ENCODE measurements at regions of chr5 and their contacts with region 1.

Region 1: DNA sequence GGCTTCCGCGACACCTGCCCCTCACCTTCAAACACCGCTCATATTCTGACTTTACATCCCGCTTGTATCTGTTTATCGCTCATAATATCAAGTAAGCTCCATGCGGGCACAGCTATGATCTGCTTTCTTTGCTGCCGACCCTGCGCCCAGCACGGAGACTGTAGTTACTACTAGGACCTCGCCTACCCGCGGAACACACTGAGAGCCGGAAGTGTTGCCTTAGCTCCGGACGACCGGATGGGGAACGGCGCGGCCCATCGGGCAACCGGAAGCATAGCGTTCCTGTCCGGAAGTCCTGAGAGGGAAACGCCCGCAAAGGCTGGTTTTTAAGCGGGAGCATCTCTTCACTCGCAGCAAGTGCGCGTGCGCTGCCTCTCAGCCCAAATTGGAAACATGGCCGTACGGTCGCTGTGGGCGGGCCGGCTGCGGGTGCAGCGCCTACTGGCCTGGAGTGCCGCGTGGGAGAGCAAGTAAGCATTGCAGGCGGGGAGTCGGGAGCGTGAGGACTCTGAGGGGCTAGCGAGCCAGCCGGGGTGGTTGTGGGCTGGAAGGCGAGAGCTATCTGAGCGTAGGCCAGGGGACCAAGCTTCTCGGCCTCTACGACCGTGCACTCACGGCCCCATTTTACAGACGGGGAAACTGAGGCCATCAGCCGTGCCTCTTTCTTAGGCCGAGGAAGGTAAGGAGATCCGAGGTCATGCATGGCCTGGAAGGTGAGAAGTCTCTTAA is at the start of gene GRPEL2:
- DNase-seq: peak; percentile 85
- H3K4me3 ChIP-seq: peak within 1 kb of the TSS; percentile 59 to 90 (median 63)
- H3K27ac ChIP-seq: peak within 1 kb of the TSS; percentile 71
- H3K4me1 ChIP-seq: peaks cover 42% of the 10 kb centered on the region
- H3K27me3 ChIP-seq: no peaks in the 10 kb centered on the region
- CTCF ChIP-seq: no peak
- POLR2A ChIP-seq: peak; percentile 83
- total RNA-seq, gene GRPEL2: 32.5 and 41.0 TPM in 2 replicates

Region 2: DNA sequence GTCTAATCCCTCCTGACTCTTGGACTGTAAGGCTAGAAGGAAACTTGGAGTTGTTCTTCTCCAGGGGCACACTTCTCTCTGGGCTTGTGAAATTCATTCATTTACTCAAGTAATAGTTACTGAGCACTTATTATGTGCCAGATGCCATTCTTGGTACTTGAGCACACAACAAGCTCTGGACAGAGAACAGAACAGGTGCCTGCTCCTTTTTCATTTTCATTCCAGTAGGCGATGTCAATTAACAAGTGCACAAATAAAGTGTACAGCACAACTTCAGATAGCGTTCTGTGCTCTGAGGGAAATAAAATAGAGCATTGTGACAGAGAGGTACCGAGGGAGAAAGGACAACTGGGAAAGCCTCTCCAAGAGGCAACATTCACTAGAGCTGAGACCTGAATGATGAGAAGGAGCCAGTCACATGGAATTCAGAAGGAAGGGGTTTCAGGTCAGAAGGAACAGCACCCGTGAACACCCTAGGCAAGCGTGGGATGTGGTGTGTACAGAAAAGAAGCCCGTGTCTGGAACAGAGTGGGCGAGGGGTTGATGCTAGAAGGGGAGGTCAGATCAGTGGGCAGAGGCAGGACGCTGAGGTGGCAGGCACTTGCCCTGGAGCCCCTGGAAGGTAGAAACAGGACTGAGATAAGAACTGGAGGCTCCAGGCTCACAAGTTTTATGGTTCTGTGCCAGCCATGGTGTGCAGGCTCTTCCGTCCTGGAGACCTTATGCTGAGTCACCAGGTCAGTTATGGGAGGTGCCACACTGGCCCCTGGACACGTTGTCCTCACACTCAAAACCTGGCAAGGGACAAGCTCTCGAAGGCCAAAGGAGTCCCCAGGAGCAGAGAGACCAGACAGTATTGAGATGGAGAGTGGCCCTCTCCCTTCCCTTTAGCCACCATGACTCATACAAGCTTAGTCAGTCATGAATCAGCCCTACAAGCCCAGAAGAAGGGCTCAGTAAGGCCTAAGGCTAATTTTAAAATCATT is 211.2 kb before region 1 on chr5:
- CTCF ChIA-PET with region 1: no interaction called
- POLR2A ChIA-PET with region 1: no interaction called
- dilution Hi-C with region 1: no loop called
- intact Hi-C with region 1: loop called (anchors 10 kb)
- DNase-seq: peak; percentile 79
- H3K4me3 ChIP-seq: no peak overlapping the region
- H3K27ac ChIP-seq: peak overlapping the region; percentile 96
- H3K4me1 ChIP-seq: peaks cover 36% of the 10 kb centered on the region
- H3K27me3 ChIP-seq: no peaks in the 10 kb centered on the region
- CTCF ChIP-seq: no peak
- POLR2A ChIP-seq: no peak

Region 3: GRCh38 chr5:149298842-149299404 is 46.4 kb before region 1 on chr5:
- CTCF ChIA-PET with region 1: no interaction called
- POLR2A ChIA-PET with region 1: no interaction called
- dilution Hi-C with region 1: no loop called
- intact Hi-C with region 1: loop called (anchors 2 kb)
- DNase-seq: peak; percentile 97
- H3K4me3 ChIP-seq: no peak overlapping the region
- H3K27ac ChIP-seq: peak overlapping the region; percentile 80
- H3K4me1 ChIP-seq: peaks cover 28% of the 10 kb centered on the region
- H3K27me3 ChIP-seq: no peaks in the 10 kb centered on the region
- CTCF ChIP-seq: no peak
- POLR2A ChIP-seq: peak; percentile 75

Region 4: GRCh38 chr5:149317281-149318048 is 27.8 kb before region 1 on chr5:
- CTCF ChIA-PET with region 1: interaction called, 14 read pairs
- POLR2A ChIA-PET with region 1: interaction called, 3 read pairs
- dilution Hi-C with region 1: no loop called
- intact Hi-C with region 1: loop called (anchors 1 kb)
- DNase-seq: peak; percentile 62
- H3K4me3 ChIP-seq: no peak overlapping the region
- H3K27ac ChIP-seq: no peak overlapping the region
- H3K4me1 ChIP-seq: peaks cover 22% of the 10 kb centered on the region
- H3K27me3 ChIP-seq: no peaks in the 10 kb centered on the region
- CTCF ChIP-seq: peak; percentile 51 to 64
- POLR2A ChIP-seq: no peak

Region 5: DNA sequence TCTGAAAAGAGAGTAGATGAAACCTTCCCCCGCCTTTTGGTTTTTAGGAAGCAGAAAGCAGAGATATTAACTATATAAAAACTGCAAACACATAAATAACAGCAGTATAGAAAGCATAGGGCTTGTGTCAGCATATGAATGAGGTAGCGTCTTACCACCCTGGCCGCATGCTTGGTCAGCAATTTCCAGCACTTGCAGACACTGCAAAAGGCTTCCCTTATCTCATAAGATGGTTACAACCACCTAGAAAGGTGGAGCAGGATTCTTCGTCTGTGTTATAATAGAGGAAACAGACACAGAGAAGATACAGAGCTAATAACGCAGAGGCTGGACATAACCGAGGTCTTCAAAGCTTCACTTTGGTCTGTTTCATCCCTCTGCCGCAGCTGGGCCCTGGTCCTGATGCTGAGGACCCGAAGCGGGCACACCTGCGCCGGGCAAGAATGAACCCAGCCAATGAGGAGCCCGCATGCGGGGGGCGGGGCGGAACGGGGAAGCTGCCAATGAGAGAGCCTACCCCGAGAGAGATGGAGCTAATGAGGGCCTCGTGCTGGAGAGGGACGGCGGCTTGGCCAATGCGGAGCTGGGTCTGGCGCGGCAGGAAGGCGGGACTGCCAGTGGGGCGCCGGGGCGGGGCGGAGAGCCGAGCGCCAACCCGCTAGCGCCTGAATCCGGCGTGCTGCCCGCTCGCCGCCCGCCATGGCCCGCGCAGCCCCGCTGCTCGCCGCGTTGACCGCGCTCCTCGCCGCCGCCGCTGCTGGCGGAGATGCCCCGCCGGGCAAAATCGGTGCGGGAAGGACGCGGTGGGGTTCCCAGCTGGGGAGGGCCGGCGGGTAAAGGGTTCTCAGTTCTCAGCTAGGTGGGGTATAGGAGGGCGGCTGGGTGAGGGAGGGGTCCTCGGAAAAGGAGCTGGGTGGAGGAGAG is 12.3 kb after region 1 on chr5 and contains the start of gene PCYOX1L:
- CTCF ChIA-PET with region 1: interaction called, 10 read pairs
- POLR2A ChIA-PET with region 1: no interaction called
- dilution Hi-C with region 1: no loop called
- intact Hi-C with region 1: loop called (anchors 1 kb)
- DNase-seq: peak; percentile 95
- H3K4me3 ChIP-seq: peak within 1 kb of the TSS; percentile 25 to 61 (median 48)
- H3K27ac ChIP-seq: no peak within 1 kb of the TSS
- H3K4me1 ChIP-seq: peaks cover 3% of the 10 kb centered on the region
- H3K27me3 ChIP-seq: no peaks in the 10 kb centered on the region
- CTCF ChIP-seq: no peak
- POLR2A ChIP-seq: peak; percentile 69
- total RNA-seq, gene PCYOX1L: 17.0 and 23.3 TPM in 2 replicates